Activated CD4-positive, alpha-beta memory T cell treated with anti-CD3 and anti-CD28 coated beads, Interleukin-2, amount 10 ng/mL, durations not matched to agents 7 days and 5 days (primary cell): ENCODE measurements at regions of chr16 and their contacts with region 1.

Region 1: GRCh38 chr16:88691924-88692560 is 5.7 kb upstream of the SNAI3 start:
- DNase-seq: peak; percentile 73
- H3K4me3 Mint-ChIP-seq: peak overlapping the region; percentile 60
- H3K27ac Mint-ChIP-seq: peak overlapping the region; percentile 92
- H3K4me1 Mint-ChIP-seq: peaks cover 55% of the 10 kb centered on the region
- H3K27me3 Mint-ChIP-seq: no peaks in the 10 kb centered on the region

Region 2: DNA sequence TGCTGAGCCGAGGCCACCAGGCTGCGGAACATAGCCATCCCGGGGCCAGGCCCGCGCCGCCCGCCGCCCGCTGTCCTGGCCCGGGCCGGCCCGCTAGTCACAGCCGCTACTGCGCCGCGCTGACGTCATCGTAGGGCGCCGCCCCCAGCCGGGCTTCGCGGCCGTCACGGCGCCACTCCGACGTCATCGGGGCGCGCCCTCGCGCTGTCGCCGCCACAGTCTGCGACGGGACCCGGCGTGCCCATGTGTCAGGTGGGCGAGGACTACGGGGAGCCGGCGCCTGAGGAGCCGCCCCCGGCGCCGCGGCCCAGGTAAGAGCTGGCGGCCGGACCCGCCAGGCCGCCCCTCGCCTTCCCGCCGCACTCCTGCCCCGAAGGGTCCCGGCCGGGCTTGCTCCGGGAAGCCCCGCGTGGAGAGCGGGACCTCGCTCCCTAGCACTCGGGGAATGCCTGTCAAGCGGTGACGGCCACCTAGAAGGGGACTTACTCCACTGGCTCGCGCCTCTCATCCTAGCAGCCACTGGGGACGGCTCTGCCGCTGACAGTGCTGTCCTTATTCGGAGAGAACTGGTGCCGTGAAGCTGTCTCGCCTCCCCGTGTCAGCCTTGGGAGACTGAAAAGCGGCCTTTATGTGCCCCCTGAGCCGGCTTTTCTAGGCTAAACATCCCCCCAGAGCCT is 14.4 kb after region 1 on chr16 and contains the starts of genes CTU2 and RNF166:
- CTCF ChIA-PET with region 1: interaction called, 4 read pairs
- POLR2A ChIA-PET with region 1: interaction called, 77 read pairs
- DNase-seq: peak; percentile 93
- H3K4me3 Mint-ChIP-seq: peak within 1 kb of the TSS; percentile 95
- H3K27ac Mint-ChIP-seq: peak within 1 kb of the TSS; percentile 98
- H3K4me1 Mint-ChIP-seq: peaks cover 44% of the 10 kb centered on the region
- H3K27me3 Mint-ChIP-seq: no peaks in the 10 kb centered on the region
- total RNA-seq, gene CTU2: 16.5 to 17.3 TPM
- total RNA-seq, gene RNF166: 155 to 156 TPM